ENCODE measurements at regions of chr9 and their contacts with region 1.

Region 1: DNA sequence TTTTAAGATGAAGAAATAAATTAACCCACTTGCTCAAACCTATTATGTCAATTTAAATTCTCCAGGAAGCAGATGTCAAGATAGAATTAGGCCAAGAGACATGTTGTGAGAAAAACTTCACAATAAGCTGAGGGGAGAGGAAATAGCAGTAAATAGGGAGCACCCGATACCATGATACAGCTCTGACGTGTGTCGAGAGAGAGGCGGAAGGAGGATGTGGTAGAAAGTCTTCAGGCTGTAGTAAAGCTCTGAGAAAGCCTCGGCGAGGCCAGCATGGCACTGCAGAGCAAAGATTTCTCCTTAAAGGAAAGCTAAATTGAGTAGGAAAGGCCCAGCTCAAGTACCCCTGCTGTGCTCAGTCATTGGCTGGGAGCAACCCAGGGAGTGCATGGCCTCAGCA is 6.0 kb upstream of the PUM3 start:
- DNase-seq: no peak
- H3K4me3 ChIP-seq: no peak overlapping the region
- H3K27ac ChIP-seq: no peak overlapping the region
- H3K4me1 ChIP-seq: peaks cover 0 to 8% (median 5%) of the 10 kb centered on the region in 4 donors
- H3K27me3 ChIP-seq: peaks cover 6% of the 10 kb centered on the region
- CTCF ChIP-seq: no peak
- EP300 ChIP-seq: no peak
- POLR2A ChIP-seq: no peak

Region 2: DNA sequence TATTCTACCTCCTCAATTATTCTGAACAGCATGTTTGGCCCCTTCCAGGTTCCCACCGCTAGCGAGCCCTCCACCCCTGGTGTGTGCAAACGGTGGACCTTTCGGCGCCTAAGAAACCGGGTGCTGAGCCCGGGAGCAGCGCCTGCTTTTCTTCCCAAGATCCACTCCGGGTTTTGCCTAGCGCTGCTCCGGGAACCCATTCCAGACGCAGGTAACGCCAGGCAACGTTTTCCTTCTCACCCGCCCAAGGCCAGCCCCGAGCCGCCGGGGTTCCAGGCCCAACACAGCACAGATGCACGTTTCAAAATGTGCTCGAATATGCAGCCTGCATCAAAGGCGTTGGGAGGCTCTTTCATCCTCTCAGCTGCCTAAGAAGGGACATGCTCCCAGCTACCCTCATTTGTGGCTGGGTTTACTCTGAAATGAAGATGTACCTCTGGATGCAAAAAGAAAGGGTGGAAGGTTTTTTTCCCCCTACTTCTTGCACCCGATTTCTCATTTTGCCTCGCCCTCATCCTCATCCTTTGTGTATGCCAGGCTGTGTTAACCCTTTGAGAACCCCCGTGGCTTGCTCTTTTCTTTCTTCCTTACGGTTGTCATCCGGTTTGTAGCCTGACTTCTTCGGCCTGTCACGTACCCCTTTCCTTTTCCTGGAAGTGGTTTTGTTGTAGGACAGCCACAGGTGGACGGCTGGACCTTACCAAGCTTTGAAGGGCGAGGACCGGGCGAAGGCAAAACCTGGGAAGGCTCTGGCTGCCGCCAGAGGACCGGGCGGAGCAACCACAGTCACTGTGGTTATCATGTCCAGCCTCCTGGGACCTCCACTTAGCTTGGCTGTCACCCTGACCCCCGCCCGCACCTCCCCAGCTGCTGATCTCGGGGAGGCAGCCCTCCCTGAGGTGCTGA is 607.9 kb before region 1 on chr9:
- in situ Hi-C with region 1: loop called in 1 of 4 experiments (anchors 10 kb)
- intact Hi-C with region 1: no loop called
- DNase-seq: peak; percentile 82
- H3K4me3 ChIP-seq: peak overlapping the region; percentile 17 to 57 (median 42)
- H3K27ac ChIP-seq: peak overlapping the region; percentile 73 to 78 (median 75)
- H3K4me1 ChIP-seq: peaks cover 0 to 16% (median 10%) of the 10 kb centered on the region in 4 donors
- H3K27me3 ChIP-seq: no peaks in the 10 kb centered on the region
- CTCF ChIP-seq: no peak
- EP300 ChIP-seq: no peak
- POLR2A ChIP-seq: peak; percentile 33

Region 3: GRCh38 chr9:4583001-4583400 is 1733.1 kb after region 1 on chr9:
- in situ Hi-C with region 1: no loop called
- intact Hi-C with region 1: loop called (anchors 10 kb)
- DNase-seq: no peak
- H3K4me3 ChIP-seq: no peak overlapping the region
- H3K27ac ChIP-seq: no peak overlapping the region
- H3K4me1 ChIP-seq: peaks cover 0 to 2% (median 0%) of the 10 kb centered on the region in 4 donors
- H3K27me3 ChIP-seq: no peaks in the 10 kb centered on the region
- CTCF ChIP-seq: no peak
- EP300 ChIP-seq: no peak
- POLR2A ChIP-seq: no peak